Sciatic nerve (tissue), 2 donors: ENCODE measurements at regions of chr5 and their contacts with region 1.

Region 1: GRCh38 chr5:139358064-139358463 is 16.4 kb downstream of the PAIP2 start:
- DNase-seq: no peak
- ATAC-seq: no peak

Region 2: DNA sequence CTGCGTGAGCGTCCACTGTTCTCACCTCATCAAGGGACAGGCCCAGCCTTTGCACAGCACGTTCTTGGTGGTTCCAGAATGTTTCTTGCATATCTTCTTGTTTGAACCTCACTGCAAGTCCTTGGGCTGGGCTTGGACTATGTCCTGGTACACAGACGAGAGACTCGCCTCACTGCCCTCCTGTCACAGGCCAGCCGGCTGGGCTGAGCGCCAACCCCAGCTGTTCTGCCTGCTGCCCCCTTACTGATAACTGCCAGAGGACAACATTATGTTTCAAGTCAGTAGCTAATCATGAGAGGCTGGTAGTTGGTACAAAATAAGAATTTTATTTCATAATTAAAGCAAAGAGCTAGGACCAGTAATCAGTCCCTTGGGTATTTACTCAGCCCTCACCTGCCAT is 430.1 kb before region 1 on chr5:
- intact Hi-C with region 1: loop called (anchors 10 kb)
- DNase-seq: no peak
- ATAC-seq: no peak